ENCODE measurements at regions of chr11 and their contacts with region 1.

Region 1: DNA sequence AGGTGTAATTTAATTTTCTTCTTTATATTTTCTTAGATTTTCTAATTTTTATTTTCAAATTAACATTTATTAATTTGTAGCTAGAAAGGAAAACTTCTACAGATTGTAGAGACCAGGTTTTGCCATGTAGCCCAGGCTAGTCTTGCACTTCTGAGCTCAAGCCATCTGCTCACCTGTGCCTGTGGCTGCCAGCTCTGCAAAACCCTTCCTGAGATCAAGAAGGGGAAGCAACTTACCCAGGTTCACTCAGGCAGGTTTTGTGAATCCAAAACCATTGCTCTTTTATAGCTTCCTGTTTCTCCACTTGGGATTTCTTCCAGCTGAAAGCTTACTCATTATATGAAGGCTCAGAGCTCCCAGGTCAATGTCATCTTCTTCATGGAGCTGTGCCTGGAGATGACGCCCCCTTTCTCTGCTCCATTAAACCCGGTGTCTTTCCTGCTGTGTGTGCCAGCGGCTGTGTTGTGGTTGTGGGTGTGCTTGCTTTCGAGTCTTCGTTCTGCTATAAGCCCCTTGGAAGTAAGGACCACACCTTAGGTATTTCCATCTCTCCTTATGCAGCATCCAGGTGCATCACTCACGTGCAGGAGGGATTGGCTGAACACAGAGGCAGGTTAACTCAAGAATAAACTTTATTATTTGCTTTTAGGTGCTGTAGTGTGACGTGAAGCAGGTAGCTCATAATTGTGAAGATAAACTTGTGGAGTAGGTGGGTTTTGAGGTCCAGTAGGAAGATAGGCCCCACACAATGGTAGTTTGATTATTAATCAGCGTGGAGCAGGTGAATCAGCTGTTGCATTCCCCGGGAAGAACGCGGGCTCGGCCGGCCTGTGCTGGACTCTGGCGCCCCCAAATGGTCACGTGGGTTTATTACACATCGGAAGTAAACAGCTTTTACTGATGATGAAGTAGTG is 42.2 kb upstream of the INCENP start:
- DNase-seq: peak; percentile 64
- ATAC-seq: peak; percentile 94
- H3K4me3 ChIP-seq: no peak overlapping the region
- H3K27ac ChIP-seq: no peak overlapping the region
- H3K4me1 ChIP-seq: peaks cover 0 to 9% of the 10 kb centered on the region in 2 experiments; a peak in 2 of 4 replicates
- H3K27me3 ChIP-seq: no peaks in the 10 kb centered on the region
- CTCF ChIP-seq: peak; percentile 76 to 95 (median 93)
- POLR2A ChIP-seq: no peak
- RAD21 ChIP-seq: peak; percentile 99

Region 2: DNA sequence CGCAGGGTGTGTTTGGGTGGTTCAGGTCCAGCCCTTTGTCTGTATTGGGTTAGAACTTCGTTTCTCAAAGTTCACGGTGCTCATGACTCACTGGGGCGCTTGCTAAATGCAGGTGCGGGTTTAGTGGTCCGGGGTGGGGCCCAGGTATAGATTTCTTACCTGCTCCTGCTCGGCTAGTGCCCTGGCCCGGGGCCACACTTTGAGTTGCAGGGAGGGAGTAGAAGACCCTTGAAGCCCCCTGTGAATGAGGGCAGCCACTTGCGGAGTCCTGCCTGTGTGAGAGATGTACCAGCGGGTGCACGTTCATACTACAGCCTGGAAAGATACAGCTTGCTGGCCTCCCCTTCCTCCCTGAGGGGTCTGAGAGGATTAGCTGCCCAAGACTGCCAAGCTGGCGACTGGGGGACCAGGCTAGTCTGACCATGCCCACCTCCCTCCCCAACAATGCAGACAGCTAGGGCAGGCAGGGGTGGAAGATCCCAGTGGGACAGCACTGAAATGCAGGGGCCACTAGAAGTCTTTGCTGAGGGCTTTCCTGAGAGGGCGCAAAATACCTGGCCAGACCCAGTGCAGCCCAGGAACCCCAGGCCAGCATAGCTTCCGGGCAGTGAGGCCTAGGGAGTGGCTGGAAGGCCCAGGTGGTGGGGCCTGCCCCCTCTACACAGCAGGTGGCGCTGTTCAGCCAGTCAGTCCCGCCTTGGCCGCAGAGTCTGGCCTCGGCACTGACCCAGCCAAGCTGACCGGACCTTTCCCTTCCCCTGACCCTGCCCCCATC is 334.3 kb before region 1 on chr11:
- CTCF ChIA-PET with region 1: interaction called, 10 read pairs
- POLR2A ChIA-PET with region 1: no interaction called
- RAD21 ChIA-PET with region 1: no interaction called
- intact Hi-C with region 1: no loop called
- DNase-seq: peak; percentile 48
- ATAC-seq: peak; percentile 83
- H3K4me3 ChIP-seq: no peak overlapping the region
- H3K27ac ChIP-seq: peak overlapping the region; percentile 21; the same call in 1 of the 2 replicates
- H3K4me1 ChIP-seq: peaks cover 6 to 24% of the 10 kb centered on the region in 2 experiments; a peak in 2 of 4 replicates
- H3K27me3 ChIP-seq: no peaks in the 10 kb centered on the region
- CTCF ChIP-seq: peak in 2 of 3 experiments; percentile 85 to 94; a peak in 4 of 6 replicates
- POLR2A ChIP-seq: no peak
- RAD21 ChIP-seq: no peak

Region 3: DNA sequence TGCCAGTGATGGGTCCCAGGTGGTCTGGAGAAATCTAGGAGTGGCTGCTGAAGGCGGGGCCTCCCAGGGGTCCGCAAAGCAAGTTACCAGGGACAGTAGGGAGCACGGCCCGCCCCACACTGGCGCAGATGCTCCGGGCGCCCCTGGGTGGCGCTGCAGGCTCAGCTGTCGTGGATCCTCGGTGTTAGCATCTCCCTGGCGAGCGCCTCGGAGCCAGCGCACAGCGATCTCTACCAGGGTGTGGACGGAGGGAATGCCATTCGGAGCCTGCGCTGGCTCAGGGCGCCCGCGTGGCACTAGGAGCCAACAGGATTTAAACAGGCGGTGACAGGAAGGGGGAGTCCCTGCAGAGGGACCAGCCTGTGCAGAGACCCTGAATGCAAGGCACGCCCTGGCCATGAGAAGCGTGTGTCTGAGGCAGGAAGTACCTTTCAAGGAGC is 210.5 kb before region 1 on chr11:
- CTCF ChIA-PET with region 1: interaction called, 35 read pairs
- POLR2A ChIA-PET with region 1: interaction called, 4 read pairs
- RAD21 ChIA-PET with region 1: interaction called, 3 to 6 read pairs
- intact Hi-C with region 1: loop called (anchors 1 kb)
- DNase-seq: peak; percentile 43
- ATAC-seq: peak; percentile 99
- H3K4me3 ChIP-seq: peak overlapping the region; percentile 6 to 47; a peak in 3 of 4 replicates
- H3K27ac ChIP-seq: no peak overlapping the region
- H3K4me1 ChIP-seq: peaks cover 9 to 20% of the 10 kb centered on the region in 2 experiments
- H3K27me3 ChIP-seq: no peaks in the 10 kb centered on the region
- CTCF ChIP-seq: peak; percentile 86 to 96 (median 94)
- POLR2A ChIP-seq: no peak
- RAD21 ChIP-seq: peak; percentile 99

Region 4: DNA sequence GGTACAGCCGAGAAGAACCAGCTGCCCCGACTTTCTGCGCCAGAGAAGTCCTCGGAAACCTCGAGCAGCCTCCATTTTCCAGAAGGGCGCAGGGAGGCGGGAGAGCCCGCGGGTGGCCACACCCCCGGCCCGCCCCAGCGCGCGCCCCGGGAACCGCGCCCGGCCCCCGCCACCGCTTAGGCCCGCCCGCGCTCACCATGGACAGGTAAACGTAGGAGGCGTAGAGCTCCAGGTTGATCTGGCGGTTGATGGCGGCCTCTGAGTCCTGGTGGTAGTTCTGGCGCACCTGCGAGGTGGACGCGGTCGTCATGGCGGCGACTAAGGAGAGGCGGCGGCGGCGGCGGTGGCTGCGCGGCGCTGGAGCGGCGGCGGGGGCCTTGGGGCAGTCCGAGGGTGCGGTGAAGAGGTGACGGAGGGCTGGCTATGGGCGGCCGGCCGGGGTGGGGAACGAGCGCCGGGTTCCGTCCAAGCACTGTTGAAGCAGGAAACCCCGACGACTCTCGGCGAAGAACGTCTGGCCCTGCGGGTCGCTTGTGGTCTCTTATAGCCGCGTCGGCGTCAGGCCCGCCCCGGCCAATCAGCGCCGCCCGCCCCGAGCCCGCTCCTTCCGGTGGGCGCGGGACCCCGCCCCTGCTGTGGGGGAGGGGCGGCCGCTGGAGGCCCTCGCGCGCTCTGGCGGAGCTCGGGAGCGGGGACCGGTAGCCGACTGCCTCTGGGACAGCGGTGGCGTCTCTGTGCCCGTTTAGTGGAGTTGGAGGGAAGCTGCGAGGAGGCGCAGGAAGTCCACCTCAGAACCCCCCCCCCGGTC is 114.3 kb before region 1 on chr11 and contains the start of gene FTH1:
- CTCF ChIA-PET with region 1: interaction called, 8 read pairs
- POLR2A ChIA-PET with region 1: interaction called, 21 read pairs
- RAD21 ChIA-PET with region 1: interaction called in 1 of 2 experiments, 4 read pairs
- intact Hi-C with region 1: no loop called
- DNase-seq: peak; percentile 71
- ATAC-seq: peak; percentile 73
- H3K4me3 ChIP-seq: peak within 1 kb of the TSS; percentile 73 to 99
- H3K27ac ChIP-seq: peak within 1 kb of the TSS; percentile 96
- H3K4me1 ChIP-seq: peaks cover 40 to 78% of the 10 kb centered on the region in 2 experiments
- H3K27me3 ChIP-seq: no peaks in the 10 kb centered on the region
- CTCF ChIP-seq: no peak
- POLR2A ChIP-seq: peak; percentile 84
- RAD21 ChIP-seq: no peak
- total RNA-seq, gene FTH1: 3,345 TPM

Region 5: GRCh38 chr11:62108017-62108750 is 26.5 kb after region 1 on chr11:
- CTCF ChIA-PET with region 1: interaction called, 47 read pairs
- POLR2A ChIA-PET with region 1: no interaction called
- RAD21 ChIA-PET with region 1: interaction called in 1 of 2 experiments, 6 read pairs
- intact Hi-C with region 1: no loop called
- DNase-seq: peak; percentile 59
- ATAC-seq: peak; percentile 84
- H3K4me3 ChIP-seq: no peak overlapping the region
- H3K27ac ChIP-seq: no peak overlapping the region
- H3K4me1 ChIP-seq: no peaks in the 10 kb centered on the region; a peak in 1 of 4 replicates
- H3K27me3 ChIP-seq: no peaks in the 10 kb centered on the region
- CTCF ChIP-seq: peak; percentile 68 to 92 (median 88)
- POLR2A ChIP-seq: no peak
- RAD21 ChIP-seq: peak; percentile 95

Measured in HCT116 (cell line).